ENCODE measurements at regions of chr19 and their contacts with region 1.

Region 1: GRCh38 chr19:4139614-4140236 is 13.7 kb upstream of the CREB3L3 start:
- DNase-seq: peak; percentile 75 to 96 (median 83)
- ATAC-seq: peak; percentile 96
- H3K4me3 ChIP-seq: no peak overlapping the region
- H3K4me3 Mint-ChIP-seq: no peak overlapping the region
- H3K27ac ChIP-seq: no peak overlapping the region
- H3K27ac Mint-ChIP-seq: no peak overlapping the region
- H3K4me1 ChIP-seq: peaks cover 8% of the 10 kb centered on the region
- H3K4me1 Mint-ChIP-seq: peaks cover 8% of the 10 kb centered on the region
- H3K27me3 ChIP-seq: no peaks in the 10 kb centered on the region
- H3K27me3 Mint-ChIP-seq: peaks cover 11% of the 10 kb centered on the region
- CTCF ChIP-seq: peak; percentile 83

Region 2: GRCh38 chr19:3879656-3880055 is 260.1 kb before region 1 on chr19:
- CTCF ChIA-PET with region 1: no interaction called
- POLR2A ChIA-PET with region 1: no interaction called
- intact Hi-C with region 1: no loop called
- DNase-seq: no peak
- ATAC-seq: no peak
- H3K4me3 ChIP-seq: no peak overlapping the region
- H3K4me3 Mint-ChIP-seq: no peak overlapping the region
- H3K27ac ChIP-seq: no peak overlapping the region
- H3K27ac Mint-ChIP-seq: no peak overlapping the region
- H3K4me1 ChIP-seq: peaks cover 18% of the 10 kb centered on the region
- H3K4me1 Mint-ChIP-seq: peaks cover 12% of the 10 kb centered on the region
- H3K27me3 ChIP-seq: peaks cover 5 to 17% of the 10 kb centered on the region in 2 experiments
- H3K27me3 Mint-ChIP-seq: peaks cover 49% of the 10 kb centered on the region
- CTCF ChIP-seq: no peak

Region 3: GRCh38 chr19:3995627-3996026 is 144.1 kb before region 1 on chr19:
- CTCF ChIA-PET with region 1: interaction called, 13 read pairs
- POLR2A ChIA-PET with region 1: no interaction called
- intact Hi-C with region 1: no loop called
- DNase-seq: no peak
- ATAC-seq: no peak
- H3K4me3 ChIP-seq: no peak overlapping the region
- H3K4me3 Mint-ChIP-seq: no peak overlapping the region
- H3K27ac ChIP-seq: no peak overlapping the region
- H3K27ac Mint-ChIP-seq: no peak overlapping the region
- H3K4me1 ChIP-seq: no peaks in the 10 kb centered on the region
- H3K4me1 Mint-ChIP-seq: peaks cover 4% of the 10 kb centered on the region
- H3K27me3 ChIP-seq: no peaks in the 10 kb centered on the region
- H3K27me3 Mint-ChIP-seq: no peaks in the 10 kb centered on the region
- CTCF ChIP-seq: no peak

Region 4: DNA sequence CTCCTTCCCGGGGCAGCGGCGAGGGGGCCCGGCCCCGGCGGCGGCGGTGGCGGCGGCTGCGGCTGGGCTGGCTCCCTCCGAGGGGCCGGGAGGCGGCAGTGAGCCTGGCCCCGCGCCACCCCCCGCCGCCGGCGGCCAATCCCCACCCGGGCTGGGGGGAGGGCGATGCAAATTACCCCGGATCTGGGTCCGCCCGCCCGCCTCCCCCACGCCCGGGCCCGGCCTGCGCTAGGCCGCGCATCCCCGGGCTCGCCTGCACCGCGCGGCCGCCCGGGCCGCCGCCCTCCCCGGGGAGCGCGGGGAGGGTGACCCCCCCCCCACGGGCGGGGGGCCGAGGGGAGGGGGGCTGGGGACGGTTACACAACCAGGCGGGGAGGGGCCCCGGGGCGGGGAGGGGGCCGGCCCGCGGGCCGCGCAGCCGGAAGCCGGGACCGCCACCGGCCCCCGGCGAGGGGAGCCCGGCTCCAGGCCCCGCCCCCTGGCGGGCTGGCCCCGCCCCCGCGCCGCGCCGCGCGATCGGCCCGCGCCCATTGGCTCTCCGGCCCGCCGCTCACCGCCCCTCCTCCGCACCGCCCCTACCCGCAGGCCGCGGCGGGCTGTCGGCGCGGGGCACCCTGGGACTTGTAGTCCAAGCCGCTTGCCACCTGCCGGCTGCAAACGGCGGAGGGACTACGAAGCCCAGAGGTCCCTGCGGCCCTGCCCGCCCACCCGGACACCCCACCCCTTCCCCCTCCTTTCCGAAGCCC is 74.1 kb before region 1 on chr19:
- CTCF ChIA-PET with region 1: interaction called, 15 read pairs
- POLR2A ChIA-PET with region 1: interaction called, 4 read pairs
- intact Hi-C with region 1: no loop called
- DNase-seq: peak; percentile 94 to 99 (median 97)
- ATAC-seq: peak; percentile 72
- H3K4me3 ChIP-seq: peak overlapping the region; percentile 86 to 89
- H3K4me3 Mint-ChIP-seq: peak overlapping the region; percentile 73
- H3K27ac ChIP-seq: no peak overlapping the region
- H3K27ac Mint-ChIP-seq: no peak overlapping the region
- H3K4me1 ChIP-seq: peaks cover 58% of the 10 kb centered on the region
- H3K4me1 Mint-ChIP-seq: peaks cover 40% of the 10 kb centered on the region
- H3K27me3 ChIP-seq: no peaks in the 10 kb centered on the region
- H3K27me3 Mint-ChIP-seq: no peaks in the 10 kb centered on the region
- CTCF ChIP-seq: no peak

Region 5: DNA sequence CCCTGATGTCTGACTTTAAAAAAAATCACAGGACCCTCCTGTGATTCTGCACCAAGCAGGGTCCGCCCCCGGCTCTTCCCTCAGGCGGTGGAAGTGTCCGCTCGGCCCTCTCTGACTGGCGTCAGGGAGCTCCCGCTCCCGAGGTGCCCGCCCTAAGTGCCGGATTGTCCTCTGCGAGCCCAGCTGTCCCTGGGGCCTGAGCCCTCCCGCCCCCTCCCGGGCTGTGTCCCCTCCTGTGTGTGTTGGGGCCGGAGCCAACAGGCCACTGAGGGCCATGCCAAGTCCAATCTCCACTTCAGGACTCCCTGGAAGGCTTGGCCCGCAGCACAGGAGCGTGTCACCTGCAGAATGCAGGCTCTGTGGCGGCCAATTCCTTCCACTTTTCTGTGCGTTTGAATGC is 41.2 kb before region 1 on chr19:
- CTCF ChIA-PET with region 1: interaction called, 12 read pairs
- POLR2A ChIA-PET with region 1: no interaction called
- intact Hi-C with region 1: no loop called
- DNase-seq: no peak
- ATAC-seq: no peak
- H3K4me3 ChIP-seq: no peak overlapping the region
- H3K4me3 Mint-ChIP-seq: no peak overlapping the region
- H3K27ac ChIP-seq: no peak overlapping the region
- H3K27ac Mint-ChIP-seq: no peak overlapping the region
- H3K4me1 ChIP-seq: peaks cover 4% of the 10 kb centered on the region
- H3K4me1 Mint-ChIP-seq: peaks cover under 1% of the 10 kb centered on the region
- H3K27me3 ChIP-seq: no peaks in the 10 kb centered on the region
- H3K27me3 Mint-ChIP-seq: no peaks in the 10 kb centered on the region
- CTCF ChIP-seq: no peak

Region 6: DNA sequence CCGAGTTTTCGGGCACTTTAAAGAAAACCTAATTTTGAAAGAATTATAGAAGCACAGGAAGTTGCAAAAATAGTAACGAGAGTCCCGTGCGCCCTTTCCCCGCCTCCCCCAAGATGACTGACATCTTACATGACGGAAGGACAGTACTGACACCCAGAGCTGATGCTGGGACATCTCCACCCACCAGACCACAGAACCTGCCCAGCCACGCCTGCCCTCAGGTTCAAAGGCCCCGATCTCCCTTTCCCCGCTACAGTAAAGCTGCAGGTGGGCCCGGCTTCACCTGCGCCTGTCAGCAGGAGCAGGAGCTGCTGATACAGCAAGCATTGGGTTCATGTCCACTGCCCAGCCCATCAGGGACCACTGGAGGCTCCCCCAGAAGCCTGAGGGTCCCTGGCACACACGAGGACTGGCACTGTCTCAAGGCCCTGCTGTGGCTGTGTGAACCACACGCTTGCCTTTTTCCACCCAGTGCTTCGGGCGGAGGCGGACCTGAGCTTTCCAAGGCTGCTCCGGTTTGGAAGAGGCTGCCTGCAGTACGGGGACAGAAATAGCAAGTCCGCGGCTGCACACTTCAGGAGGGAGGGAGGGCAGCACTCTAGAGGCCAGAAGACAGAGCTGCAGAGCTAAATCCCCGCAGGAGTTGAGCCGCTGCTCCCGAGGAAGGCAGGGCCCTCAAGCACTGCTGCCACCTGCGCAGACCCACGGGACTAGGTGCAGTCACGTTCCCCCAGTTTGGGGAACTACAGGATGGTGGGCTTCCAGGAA is 24.5 kb before region 1 on chr19:
- CTCF ChIA-PET with region 1: interaction called, 10 read pairs
- POLR2A ChIA-PET with region 1: no interaction called
- intact Hi-C with region 1: no loop called
- DNase-seq: peak; percentile 39 to 91 (median 73)
- ATAC-seq: peak; percentile 99
- H3K4me3 ChIP-seq: peak overlapping the region in 1 of 2 experiments; percentile 50
- H3K4me3 Mint-ChIP-seq: peak overlapping the region; percentile 70
- H3K27ac ChIP-seq: peak overlapping the region; percentile 52 to 68
- H3K27ac Mint-ChIP-seq: peak overlapping the region; percentile 90
- H3K4me1 ChIP-seq: peaks cover 32% of the 10 kb centered on the region
- H3K4me1 Mint-ChIP-seq: peaks cover 45% of the 10 kb centered on the region
- H3K27me3 ChIP-seq: no peaks in the 10 kb centered on the region
- H3K27me3 Mint-ChIP-seq: no peaks in the 10 kb centered on the region
- CTCF ChIP-seq: no peak

Region 7: GRCh38 chr19:4154571-4155312 is 15.0 kb after region 1 on chr19:
- CTCF ChIA-PET with region 1: interaction called, 13 read pairs
- POLR2A ChIA-PET with region 1: no interaction called
- intact Hi-C with region 1: no loop called
- DNase-seq: no peak
- ATAC-seq: no peak
- H3K4me3 ChIP-seq: no peak overlapping the region
- H3K4me3 Mint-ChIP-seq: no peak overlapping the region
- H3K27ac ChIP-seq: no peak overlapping the region
- H3K27ac Mint-ChIP-seq: no peak overlapping the region
- H3K4me1 ChIP-seq: no peaks in the 10 kb centered on the region
- H3K4me1 Mint-ChIP-seq: peaks cover 3% of the 10 kb centered on the region
- H3K27me3 ChIP-seq: no peaks in the 10 kb centered on the region
- H3K27me3 Mint-ChIP-seq: peaks cover under 1% of the 10 kb centered on the region
- CTCF ChIP-seq: no peak

Region 8: GRCh38 chr19:4208385-4209094 is 68.8 kb after region 1 on chr19:
- CTCF ChIA-PET with region 1: interaction called, 3 read pairs
- POLR2A ChIA-PET with region 1: no interaction called
- intact Hi-C with region 1: loop called in 1 of 2 experiments (anchors 1 kb)
- DNase-seq: no peak
- ATAC-seq: no peak
- H3K4me3 ChIP-seq: no peak overlapping the region
- H3K4me3 Mint-ChIP-seq: no peak overlapping the region
- H3K27ac ChIP-seq: no peak overlapping the region
- H3K27ac Mint-ChIP-seq: no peak overlapping the region
- H3K4me1 ChIP-seq: no peaks in the 10 kb centered on the region
- H3K4me1 Mint-ChIP-seq: peaks cover 2% of the 10 kb centered on the region
- H3K27me3 ChIP-seq: no peaks in the 10 kb centered on the region
- H3K27me3 Mint-ChIP-seq: peaks cover 9% of the 10 kb centered on the region
- CTCF ChIP-seq: no peak

Region 9: GRCh38 chr19:4229179-4229931 is 89.6 kb after region 1 on chr19 and contains the start of gene EBI3:
- CTCF ChIA-PET with region 1: no interaction called
- POLR2A ChIA-PET with region 1: no interaction called
- intact Hi-C with region 1: no loop called
- DNase-seq: peak in 2 of 9 experiments; percentile 43 to 54
- ATAC-seq: peak; percentile 34
- H3K4me3 ChIP-seq: no peak within 1 kb of the TSS
- H3K4me3 Mint-ChIP-seq: no peak within 1 kb of the TSS
- H3K27ac ChIP-seq: no peak within 1 kb of the TSS
- H3K27ac Mint-ChIP-seq: no peak within 1 kb of the TSS
- H3K4me1 ChIP-seq: no peaks in the 10 kb centered on the region
- H3K4me1 Mint-ChIP-seq: no peaks in the 10 kb centered on the region
- H3K27me3 ChIP-seq: peaks cover 4 to 22% of the 10 kb centered on the region in 2 experiments
- H3K27me3 Mint-ChIP-seq: peaks cover 20% of the 10 kb centered on the region
- CTCF ChIP-seq: no peak
- total RNA-seq, gene EBI3: not detected